Breast epithelium (tissue), 4 donors: ENCODE measurements at regions of chr21 and their contacts with region 1.

Region 1: DNA sequence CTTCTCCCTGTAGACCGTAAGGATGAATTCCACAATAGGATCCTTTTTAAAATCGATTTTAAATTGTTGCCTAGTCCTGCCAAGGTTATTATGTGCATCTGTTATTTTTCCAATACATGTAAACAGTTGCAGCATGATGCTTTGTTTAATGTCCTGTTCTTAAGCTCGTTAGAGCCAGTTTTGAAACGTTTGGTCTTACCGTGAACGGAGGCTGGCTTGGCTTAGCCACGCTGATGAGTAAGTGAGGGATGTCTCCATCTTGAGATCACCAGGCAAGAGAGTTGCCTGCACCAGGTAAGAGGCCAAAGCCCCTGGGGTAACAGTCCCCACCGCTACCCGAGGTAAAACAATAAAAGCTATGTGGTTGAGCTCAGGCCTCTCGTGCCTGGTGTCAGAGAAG is 17.3 kb downstream of the CSTB start:
- DNase-seq: no peak
- H3K4me3 ChIP-seq: peak overlapping the region in 1 of 3 donors; percentile 42
- H3K27ac ChIP-seq: peak overlapping the region; percentile 73 to 82
- H3K4me1 ChIP-seq: peaks cover 0 to 12% of the 10 kb centered on the region in 2 donors
- H3K27me3 ChIP-seq: no peaks in the 10 kb centered on the region
- CTCF ChIP-seq: no peak
- POLR2A ChIP-seq: no peak

Region 2: GRCh38 chr21:43775795-43776430 is 17.1 kb after region 1 on chr21 and contains the start of gene CSTB:
- intact Hi-C with region 1: loop called (anchors 1 kb)
- DNase-seq: peak; percentile 69 to 77
- H3K4me3 ChIP-seq: peak within 1 kb of the TSS; percentile 92 to 99 (median 94)
- H3K27ac ChIP-seq: peak within 1 kb of the TSS; percentile 95 to 96
- H3K4me1 ChIP-seq: peaks cover 0 to 11% of the 10 kb centered on the region in 2 donors
- H3K27me3 ChIP-seq: no peaks in the 10 kb centered on the region
- CTCF ChIP-seq: no peak
- POLR2A ChIP-seq: peak; percentile 28
- total RNA-seq, gene CSTB: 12.1 to 16.8 (median 16.8) TPM